Activated CD4-positive, alpha-beta T cell treated with anti-CD3 and anti-CD28 coated beads, Interleukin-2, amount 10 ng/mL, durations not matched to agents 7 days and 5 days (primary cell): ENCODE measurements at regions of chr16 and their contacts with region 1.

Region 1: GRCh38 chr16:74666425-74667254 is at the start of gene RFWD3:
- DNase-seq: peak; percentile 98
- H3K4me3 Mint-ChIP-seq: peak within 1 kb of the TSS; percentile 97
- H3K27ac Mint-ChIP-seq: peak within 1 kb of the TSS; percentile 100
- H3K4me1 Mint-ChIP-seq: peaks cover 48% of the 10 kb centered on the region
- H3K27me3 Mint-ChIP-seq: no peaks in the 10 kb centered on the region
- total RNA-seq, gene RFWD3: 115 to 117 TPM

Region 2: GRCh38 chr16:74606521-74607310 is 59.9 kb before region 1 on chr16 and contains the start of gene GLG1:
- CTCF ChIA-PET with region 1: no interaction called
- POLR2A ChIA-PET with region 1: interaction called, 10 read pairs
- DNase-seq: peak; percentile 91
- H3K4me3 Mint-ChIP-seq: peak within 1 kb of the TSS; percentile 94
- H3K27ac Mint-ChIP-seq: peak within 1 kb of the TSS; percentile 91
- H3K4me1 Mint-ChIP-seq: peaks cover 63% of the 10 kb centered on the region
- H3K27me3 Mint-ChIP-seq: no peaks in the 10 kb centered on the region
- total RNA-seq, gene GLG1: 151 to 157 TPM